CD14-positive monocyte (primary cell): ENCODE measurements at regions of chr3 and their contacts with region 1.

Region 1: GRCh38 chr3:50350527-50351322 is at the starts of genes CYB561D2 and NPRL2:
- DNase-seq: peak; percentile 95 to 97 (median 96)
- H3K4me3 ChIP-seq: peak within 1 kb of the TSS; percentile 79 to 93 (median 85)
- H3K4me3 Mint-ChIP-seq: peak within 1 kb of the TSS; percentile 92 to 95
- H3K27ac ChIP-seq: peak within 1 kb of the TSS; percentile 85 to 94
- H3K27ac Mint-ChIP-seq: peak within 1 kb of the TSS; percentile 95 to 99 (median 97)
- H3K4me1 ChIP-seq: peaks cover 42 to 58% of the 10 kb centered on the region in 2 donors
- H3K4me1 Mint-ChIP-seq: peaks cover 59% of the 10 kb centered on the region
- H3K27me3 ChIP-seq: no peaks in the 10 kb centered on the region
- H3K27me3 Mint-ChIP-seq: no peaks in the 10 kb centered on the region
- CTCF ChIP-seq: no peak
- polyA plus RNA-seq, gene CYB561D2: 78.9 to 94.0 (median 82.5) TPM
- polyA plus RNA-seq, gene NPRL2: 20.9 to 37.9 (median 23.5) TPM

Region 2: DNA sequence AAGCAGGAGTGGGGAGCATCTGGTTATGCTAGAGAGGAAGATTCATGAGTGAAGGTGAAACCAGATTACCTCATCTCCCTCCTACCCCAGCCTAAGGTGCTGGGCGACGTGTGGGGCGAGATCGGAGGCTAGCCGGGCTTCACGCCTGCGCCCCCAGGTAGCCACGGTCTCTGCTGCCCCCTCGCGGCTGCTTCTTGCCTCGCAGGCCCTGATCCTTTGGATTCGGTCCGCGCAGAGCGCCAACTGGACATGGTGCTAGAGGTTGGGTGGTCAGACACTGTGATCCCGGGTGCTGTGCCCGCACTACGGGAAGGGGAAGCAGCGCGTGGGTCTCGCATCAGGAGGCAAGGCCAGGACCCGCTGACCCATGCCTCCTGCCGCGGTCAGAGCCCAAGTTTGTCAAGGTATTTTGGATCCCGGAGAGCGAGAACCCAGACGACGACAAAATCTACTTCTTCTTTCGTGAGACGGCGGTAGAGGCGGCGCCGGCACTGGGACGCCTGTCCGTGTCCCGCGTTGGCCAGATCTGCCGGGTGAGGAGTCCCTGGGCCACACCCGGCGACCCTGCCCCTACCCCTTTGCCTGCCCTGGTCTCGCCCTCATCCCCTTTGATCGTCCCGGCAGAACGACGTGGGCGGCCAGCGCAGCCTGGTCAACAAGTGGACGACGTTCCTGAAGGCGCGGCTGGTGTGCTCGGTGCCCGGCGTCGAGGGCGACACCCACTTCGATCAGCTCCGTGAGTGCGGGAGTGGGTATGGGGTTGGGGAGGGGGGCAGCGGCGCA is 77.6 kb before region 1 on chr3:
- intact Hi-C with region 1: no loop called
- DNase-seq: peak; percentile 81 to 87 (median 85)
- H3K4me3 ChIP-seq: peak overlapping the region; percentile 16 to 72 (median 32)
- H3K4me3 Mint-ChIP-seq: peak overlapping the region; percentile 82 to 93
- H3K27ac ChIP-seq: peak overlapping the region in 1 of 2 donors; percentile 20
- H3K27ac Mint-ChIP-seq: peak overlapping the region in 4 of 7 donors; percentile 43 to 86 (median 77)
- H3K4me1 ChIP-seq: peaks cover 16 to 34% of the 10 kb centered on the region in 2 donors
- H3K4me1 Mint-ChIP-seq: peaks cover 26% of the 10 kb centered on the region
- H3K27me3 ChIP-seq: peaks cover 24 to 47% of the 10 kb centered on the region in 2 donors
- H3K27me3 Mint-ChIP-seq: peaks cover 51 to 66% (median 64%) of the 10 kb centered on the region in 3 donors
- CTCF ChIP-seq: peak; percentile 96

Region 3: DNA sequence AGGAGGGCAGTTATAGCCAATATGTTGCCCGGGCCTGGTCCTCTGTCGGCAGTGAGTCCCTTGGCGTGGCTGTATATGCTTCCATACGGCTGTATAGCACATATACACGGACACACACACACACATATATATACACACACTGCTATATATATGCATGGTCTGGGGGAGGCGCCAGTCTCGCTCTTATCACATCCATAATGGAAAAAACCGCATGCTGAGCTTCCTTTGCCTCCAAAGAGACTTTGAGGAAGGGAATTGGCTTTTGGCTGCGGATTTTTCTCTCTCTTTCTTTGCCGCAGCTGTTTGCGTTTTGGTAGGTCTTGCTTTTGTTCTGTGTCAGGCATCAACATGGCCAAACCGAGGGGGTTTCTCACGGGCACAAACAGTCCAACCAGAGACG is 19.9 kb after region 1 on chr3:
- intact Hi-C with region 1: no loop called
- DNase-seq: no peak
- H3K4me3 ChIP-seq: no peak overlapping the region
- H3K4me3 Mint-ChIP-seq: no peak overlapping the region
- H3K27ac ChIP-seq: no peak overlapping the region
- H3K27ac Mint-ChIP-seq: no peak overlapping the region
- H3K4me1 ChIP-seq: peaks cover 1 to 2% of the 10 kb centered on the region in 2 donors
- H3K4me1 Mint-ChIP-seq: peaks cover 2% of the 10 kb centered on the region
- H3K27me3 ChIP-seq: peaks cover 0 to 5% of the 10 kb centered on the region in 2 donors
- H3K27me3 Mint-ChIP-seq: peaks cover 10 to 17% (median 15%) of the 10 kb centered on the region in 3 donors
- CTCF ChIP-seq: no peak

Region 4: GRCh38 chr3:50542177-50543034 is 191.7 kb after region 1 on chr3:
- intact Hi-C with region 1: loop called in 1 of 2 experiments (anchors 5 kb)
- DNase-seq: peak; percentile 36 to 66 (median 57)
- H3K4me3 ChIP-seq: no peak overlapping the region
- H3K4me3 Mint-ChIP-seq: no peak overlapping the region
- H3K27ac ChIP-seq: no peak overlapping the region
- H3K27ac Mint-ChIP-seq: no peak overlapping the region
- H3K4me1 ChIP-seq: no peaks in the 10 kb centered on the region
- H3K4me1 Mint-ChIP-seq: no peaks in the 10 kb centered on the region
- H3K27me3 ChIP-seq: peaks cover 0 to 4% of the 10 kb centered on the region in 2 donors
- H3K27me3 Mint-ChIP-seq: peaks cover 15 to 16% (median 16%) of the 10 kb centered on the region in 3 donors
- CTCF ChIP-seq: peak; percentile 94

Region 5: DNA sequence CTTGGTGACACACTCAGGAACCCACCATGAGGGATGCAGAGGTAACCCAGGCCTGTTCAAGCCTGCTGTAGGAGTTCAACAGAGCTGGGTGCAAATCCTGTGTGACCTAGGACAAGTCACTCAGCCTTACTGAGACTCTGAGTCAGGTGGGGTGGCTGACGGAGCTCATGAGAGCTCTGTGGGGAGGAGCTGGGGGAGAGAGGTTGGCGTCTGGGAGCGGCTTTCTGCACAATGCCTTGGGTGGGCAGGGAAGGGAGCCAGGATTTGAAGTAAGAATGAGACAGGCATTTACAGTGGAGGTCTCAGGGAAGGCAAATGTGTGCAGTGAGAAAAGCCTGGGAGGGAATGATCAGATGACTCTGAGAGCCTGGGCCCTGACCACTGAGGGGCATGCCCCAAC is 198.5 kb after region 1 on chr3:
- intact Hi-C with region 1: loop called (anchors 2 to 5 kb)
- DNase-seq: no peak
- H3K4me3 ChIP-seq: no peak overlapping the region
- H3K4me3 Mint-ChIP-seq: no peak overlapping the region
- H3K27ac ChIP-seq: no peak overlapping the region
- H3K27ac Mint-ChIP-seq: no peak overlapping the region
- H3K4me1 ChIP-seq: no peaks in the 10 kb centered on the region
- H3K4me1 Mint-ChIP-seq: no peaks in the 10 kb centered on the region
- H3K27me3 ChIP-seq: no peaks in the 10 kb centered on the region
- H3K27me3 Mint-ChIP-seq: peaks cover 2 to 3% (median 3%) of the 10 kb centered on the region in 3 donors
- CTCF ChIP-seq: no peak